A673 (cell line): ENCODE measurements at regions of chr16 and their contacts with region 1.

Region 1: GRCh38 chr16:67521095-67521804 is 7.4 kb upstream of the RIPOR1 start:
- DNase-seq: peak; percentile 98
- H3K4me3 ChIP-seq: peak overlapping the region; percentile 47
- H3K27ac ChIP-seq: peak overlapping the region; percentile 72
- H3K4me1 ChIP-seq: no peaks in the 10 kb centered on the region
- H3K27me3 ChIP-seq: no peaks in the 10 kb centered on the region
- CTCF ChIP-seq: peak; percentile 76

Region 2: DNA sequence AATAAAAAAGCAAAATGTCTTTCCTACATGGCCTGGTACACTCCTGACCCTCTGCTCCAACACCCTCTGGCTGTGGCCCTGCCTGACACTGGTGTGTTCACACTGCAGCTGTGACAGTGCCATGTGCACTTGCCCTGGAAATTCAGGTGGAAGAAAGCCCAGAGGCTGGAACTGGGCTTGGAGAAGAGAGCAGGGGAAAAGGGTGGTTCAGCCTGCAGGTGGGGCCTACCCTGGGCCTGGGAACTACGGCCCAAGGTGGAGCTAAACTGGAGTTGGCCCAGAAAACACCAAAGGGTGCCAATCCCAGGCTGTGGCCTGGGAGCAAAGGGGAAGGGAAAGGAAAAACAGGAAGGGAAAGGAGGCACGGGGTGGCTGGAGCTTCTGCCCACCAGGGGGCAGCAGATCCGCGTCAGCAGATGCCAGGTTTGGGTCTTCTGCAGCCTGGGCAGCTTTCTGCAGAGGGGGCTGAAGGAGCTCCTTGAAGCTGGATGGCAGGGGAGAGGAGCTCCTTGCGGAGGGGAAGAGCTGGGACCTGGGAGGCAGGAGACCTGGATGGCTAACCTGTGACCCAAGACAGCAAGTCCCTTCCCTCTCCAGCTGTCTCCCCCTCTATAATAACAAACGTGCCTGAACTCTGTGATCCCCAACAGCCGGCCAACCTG is 25.6 kb after region 1 on chr16:
- CTCF ChIA-PET with region 1: interaction called, 11 read pairs
- POLR2A ChIA-PET with region 1: no interaction called
- intact Hi-C with region 1: no loop called
- DNase-seq: peak; percentile 84
- H3K4me3 ChIP-seq: no peak overlapping the region
- H3K27ac ChIP-seq: peak overlapping the region; percentile 47
- H3K4me1 ChIP-seq: no peaks in the 10 kb centered on the region
- H3K27me3 ChIP-seq: no peaks in the 10 kb centered on the region
- CTCF ChIP-seq: peak; percentile 98

Region 3: GRCh38 chr16:67645397-67646121 is 124.3 kb after region 1 on chr16:
- CTCF ChIA-PET with region 1: interaction called, 12 read pairs
- POLR2A ChIA-PET with region 1: no interaction called
- intact Hi-C with region 1: no loop called
- DNase-seq: no peak
- H3K4me3 ChIP-seq: peak overlapping the region; percentile 45
- H3K27ac ChIP-seq: no peak overlapping the region
- H3K4me1 ChIP-seq: no peaks in the 10 kb centered on the region
- H3K27me3 ChIP-seq: peaks cover 40% of the 10 kb centered on the region
- CTCF ChIP-seq: no peak

Region 4: DNA sequence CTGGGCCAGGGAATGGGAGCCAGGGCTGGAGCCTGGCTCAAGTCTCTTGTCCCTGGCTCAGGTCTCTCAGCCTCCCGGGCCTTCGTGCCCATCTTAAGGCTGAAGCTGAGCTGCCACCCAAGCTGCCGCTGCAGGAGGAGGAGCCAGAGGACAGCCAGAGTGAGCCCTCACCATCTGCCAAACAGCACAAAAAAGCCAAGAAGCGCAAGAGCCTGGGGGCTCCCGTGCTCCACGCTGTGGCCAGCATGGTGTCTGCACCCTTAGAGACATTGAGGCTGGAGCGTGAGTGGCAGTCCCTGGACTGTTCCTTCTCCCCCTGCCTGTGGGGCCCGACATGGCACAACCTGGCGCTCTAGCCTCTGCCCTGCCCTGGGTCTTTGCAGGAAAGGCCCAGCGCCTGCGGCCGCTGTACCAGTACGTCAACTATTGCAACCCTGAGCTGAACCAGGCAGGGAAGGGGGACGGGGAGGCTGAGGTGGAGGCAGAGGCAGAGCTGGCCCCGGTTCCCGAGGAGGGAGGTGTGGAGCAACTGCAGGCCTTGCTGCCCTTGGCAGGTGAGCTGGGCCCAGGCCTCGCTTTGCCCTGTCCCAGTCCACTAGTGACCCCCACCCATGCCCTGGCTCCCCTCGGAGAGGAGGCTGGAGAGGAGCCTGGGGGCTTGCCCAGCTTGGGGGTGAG is 146.7 kb after region 1 on chr16:
- CTCF ChIA-PET with region 1: interaction called, 22 read pairs
- POLR2A ChIA-PET with region 1: no interaction called
- intact Hi-C with region 1: loop called (anchors 1 kb)
- DNase-seq: peak; percentile 96
- H3K4me3 ChIP-seq: no peak overlapping the region
- H3K27ac ChIP-seq: no peak overlapping the region
- H3K4me1 ChIP-seq: peaks cover 12% of the 10 kb centered on the region
- H3K27me3 ChIP-seq: no peaks in the 10 kb centered on the region
- CTCF ChIP-seq: peak; percentile 85

Region 5: DNA sequence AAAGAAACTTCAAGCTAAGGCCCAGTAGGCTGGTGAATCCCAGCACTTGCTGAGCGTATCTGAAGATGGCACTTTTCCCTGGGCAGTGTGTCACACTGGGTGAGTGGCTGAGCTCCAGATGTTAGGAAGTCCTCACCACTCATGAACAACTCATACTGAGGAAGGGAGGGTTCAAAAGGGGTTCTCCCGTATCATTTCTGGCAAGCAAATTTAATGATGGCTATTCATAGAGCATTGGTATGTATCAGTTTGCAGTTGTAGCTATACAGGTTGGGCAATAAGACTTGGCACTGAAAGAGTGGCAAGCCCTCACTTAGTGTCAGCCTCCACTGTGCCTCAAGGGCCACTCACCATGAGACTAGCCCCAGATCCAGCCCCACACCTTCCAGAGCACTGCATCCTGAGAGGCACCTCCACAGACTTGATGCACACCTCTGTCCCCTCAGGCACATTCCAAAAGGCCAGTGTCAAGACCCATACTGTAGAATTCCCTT is 187.2 kb after region 1 on chr16:
- CTCF ChIA-PET with region 1: no interaction called
- POLR2A ChIA-PET with region 1: no interaction called
- intact Hi-C with region 1: no loop called
- DNase-seq: no peak
- H3K4me3 ChIP-seq: no peak overlapping the region
- H3K27ac ChIP-seq: no peak overlapping the region
- H3K4me1 ChIP-seq: no peaks in the 10 kb centered on the region
- H3K27me3 ChIP-seq: no peaks in the 10 kb centered on the region
- CTCF ChIP-seq: no peak

Region 6: GRCh38 chr16:68040507-68041288 is 519.4 kb after region 1 on chr16:
- CTCF ChIA-PET with region 1: interaction called, 4 read pairs
- POLR2A ChIA-PET with region 1: no interaction called
- intact Hi-C with region 1: loop called (anchors 10 kb)
- DNase-seq: peak; percentile 72
- H3K4me3 ChIP-seq: no peak overlapping the region
- H3K27ac ChIP-seq: no peak overlapping the region
- H3K4me1 ChIP-seq: no peaks in the 10 kb centered on the region
- H3K27me3 ChIP-seq: no peaks in the 10 kb centered on the region
- CTCF ChIP-seq: peak; percentile 91